BJ (cell line): ENCODE measurements at regions of chr10 and their contacts with region 1.

Region 1: GRCh38 chr10:119207367-119207668 is at the start of gene GRK5:
- DNase-seq: peak; percentile 91
- H3K4me3 ChIP-seq: peak within 1 kb of the TSS; percentile 91
- H3K27me3 ChIP-seq: no peaks in the 10 kb centered on the region
- CTCF ChIP-seq: no peak
- polyA plus RNA-seq, gene GRK5: 14.7 and 20.8 TPM in 2 replicates

Region 2: GRCh38 chr10:118970770-118971169 is 236.5 kb before region 1 on chr10:
- CTCF ChIA-PET with region 1: no interaction called
- POLR2A ChIA-PET with region 1: no interaction called
- DNase-seq: no peak
- H3K4me3 ChIP-seq: no peak overlapping the region
- H3K27me3 ChIP-seq: peaks cover 12% of the 10 kb centered on the region
- CTCF ChIP-seq: no peak

Region 3: DNA sequence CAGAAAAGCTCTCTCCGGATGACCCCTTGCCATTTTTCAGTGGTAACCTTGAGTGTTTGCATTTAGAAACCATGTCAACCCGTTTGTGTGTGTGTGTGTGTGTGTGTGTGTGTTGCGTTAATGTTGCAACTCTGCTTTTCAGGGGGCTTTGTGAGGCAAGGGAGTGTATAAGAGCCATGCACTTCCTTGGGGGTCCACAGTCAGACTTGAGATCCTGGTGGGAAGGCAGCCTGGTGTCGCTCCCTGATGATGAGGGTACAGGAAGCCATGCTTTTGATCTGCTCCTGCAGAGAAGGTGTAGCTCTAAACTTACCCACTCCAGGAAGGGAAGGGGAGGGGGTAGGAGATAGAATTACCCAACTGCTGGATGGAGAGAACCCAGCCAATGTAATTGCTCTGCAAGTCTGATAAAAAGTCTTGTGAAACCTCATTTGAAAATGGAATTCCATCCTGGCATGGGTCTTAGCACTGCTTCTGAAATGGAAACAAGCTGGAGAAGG is 10.7 kb after region 1 on chr10:
- CTCF ChIA-PET with region 1: interaction called, 15 read pairs
- POLR2A ChIA-PET with region 1: interaction called, 3 read pairs
- DNase-seq: no peak
- H3K4me3 ChIP-seq: no peak overlapping the region
- H3K27me3 ChIP-seq: no peaks in the 10 kb centered on the region
- CTCF ChIP-seq: no peak

Region 4: GRCh38 chr10:119274519-119275045 is 67.3 kb after region 1 on chr10:
- CTCF ChIA-PET with region 1: interaction called, 10 read pairs
- POLR2A ChIA-PET with region 1: interaction called, 3 read pairs
- DNase-seq: no peak
- H3K4me3 ChIP-seq: no peak overlapping the region
- H3K27me3 ChIP-seq: no peaks in the 10 kb centered on the region
- CTCF ChIP-seq: no peak

Region 5: GRCh38 chr10:119315128-119316001 is 108.0 kb after region 1 on chr10:
- CTCF ChIA-PET with region 1: no interaction called
- POLR2A ChIA-PET with region 1: no interaction called
- DNase-seq: peak; percentile 67
- H3K4me3 ChIP-seq: no peak overlapping the region
- H3K27me3 ChIP-seq: no peaks in the 10 kb centered on the region
- CTCF ChIP-seq: no peak

Region 6: GRCh38 chr10:119416855-119417254 is 209.5 kb after region 1 on chr10:
- CTCF ChIA-PET with region 1: interaction called, 20 read pairs
- POLR2A ChIA-PET with region 1: no interaction called
- DNase-seq: no peak
- H3K4me3 ChIP-seq: no peak overlapping the region
- H3K27me3 ChIP-seq: no peaks in the 10 kb centered on the region
- CTCF ChIP-seq: peak; percentile 67

Region 7: DNA sequence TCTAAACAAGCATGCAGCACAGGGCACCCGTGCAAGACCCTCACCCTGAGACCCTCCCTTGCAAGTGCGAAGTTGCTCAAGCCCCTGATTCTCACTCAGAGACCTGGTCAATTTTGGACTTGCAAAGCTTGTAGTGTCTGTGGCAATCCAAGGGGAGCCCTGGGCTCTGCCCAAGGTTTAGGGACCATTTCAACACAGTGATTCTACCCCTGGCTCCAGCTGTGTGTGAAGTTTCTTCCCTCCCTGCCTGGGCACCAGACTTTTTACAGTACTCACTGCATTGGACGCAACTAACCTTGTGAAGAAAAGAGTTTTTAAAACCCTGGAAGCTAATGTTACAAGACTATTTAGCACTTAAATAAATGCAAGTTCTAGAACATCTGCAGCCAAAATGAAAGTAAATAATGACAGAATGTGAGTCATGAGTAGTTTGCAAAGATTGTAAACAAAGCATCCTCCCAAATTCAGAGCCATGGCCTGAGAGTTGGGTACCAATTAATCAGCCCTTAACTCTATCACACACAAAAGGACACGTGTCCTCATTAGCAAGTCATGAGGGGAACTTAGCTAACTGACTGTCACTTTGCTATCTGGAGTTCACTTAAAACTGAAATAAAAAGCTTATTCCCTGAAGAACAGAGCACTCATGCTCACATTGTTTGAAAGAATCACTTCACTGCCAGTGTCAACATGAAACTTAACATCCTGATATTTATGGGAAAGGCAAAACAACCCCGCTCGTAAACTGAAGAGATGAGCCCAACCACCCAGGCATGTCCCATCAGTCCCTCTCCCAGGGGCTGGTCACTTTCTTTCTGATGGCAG is 287.1 kb after region 1 on chr10:
- CTCF ChIA-PET with region 1: interaction called, 35 read pairs
- POLR2A ChIA-PET with region 1: no interaction called
- DNase-seq: no peak
- H3K4me3 ChIP-seq: no peak overlapping the region
- H3K27me3 ChIP-seq: no peaks in the 10 kb centered on the region
- CTCF ChIP-seq: no peak

Region 8: DNA sequence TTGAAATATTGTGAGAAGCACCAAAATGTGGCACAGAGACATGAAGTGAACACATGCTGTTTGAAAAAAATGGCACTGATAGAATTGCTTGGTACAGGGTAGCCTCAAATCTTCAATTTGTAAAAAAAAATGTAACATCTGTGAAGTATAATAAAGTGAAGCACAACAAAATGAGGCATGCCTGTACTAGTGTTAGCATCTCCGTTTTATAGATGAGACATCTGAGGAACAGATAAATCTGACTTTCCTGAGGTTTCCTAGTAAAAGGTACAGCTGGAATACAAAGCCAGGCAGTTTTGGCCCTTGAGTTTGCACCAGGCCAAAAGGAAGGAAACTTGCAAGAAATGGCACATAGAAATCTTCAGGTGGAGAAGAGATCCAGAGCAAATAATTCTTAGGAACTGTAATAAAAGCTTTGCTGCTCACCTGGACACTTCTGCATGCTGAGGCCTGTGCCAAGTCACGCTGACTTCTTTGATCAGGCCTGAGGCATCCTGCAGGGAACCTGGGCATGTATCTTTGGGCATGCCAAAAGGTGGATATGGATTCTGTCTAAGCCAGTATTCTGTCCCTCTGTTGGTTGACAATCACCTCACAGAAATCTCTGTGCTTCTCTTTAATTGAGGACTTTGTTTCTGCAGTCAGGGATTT is 998.2 kb after region 1 on chr10:
- CTCF ChIA-PET with region 1: no interaction called
- POLR2A ChIA-PET with region 1: no interaction called
- DNase-seq: no peak
- H3K4me3 ChIP-seq: no peak overlapping the region
- H3K27me3 ChIP-seq: no peaks in the 10 kb centered on the region
- CTCF ChIP-seq: no peak